ENCODE measurements at regions of chr22 and their contacts with region 1.

Region 1: GRCh38 chr22:43187171-43188099 is 501 bp upstream of the TTLL12 start:
- DNase-seq: peak; percentile 98
- H3K4me3 Mint-ChIP-seq: peak overlapping the region; percentile 87
- H3K27ac Mint-ChIP-seq: peak overlapping the region; percentile 95
- H3K4me1 Mint-ChIP-seq: peaks cover 23% of the 10 kb centered on the region
- H3K27me3 Mint-ChIP-seq: no peaks in the 10 kb centered on the region

Region 2: GRCh38 chr22:42856865-42857704 is 330.4 kb before region 1 on chr22 and contains the start of gene ARFGAP3:
- CTCF ChIA-PET with region 1: no interaction called
- intact Hi-C with region 1: loop called (anchors 2 kb)
- DNase-seq: peak; percentile 94
- H3K4me3 Mint-ChIP-seq: peak within 1 kb of the TSS; percentile 81
- H3K27ac Mint-ChIP-seq: peak within 1 kb of the TSS; percentile 66
- H3K4me1 Mint-ChIP-seq: peaks cover 6% of the 10 kb centered on the region
- H3K27me3 Mint-ChIP-seq: no peaks in the 10 kb centered on the region
- total RNA-seq, gene ARFGAP3: 25.6 to 28.6 TPM

Region 3: GRCh38 chr22:43110444-43110926 is 77.0 kb before region 1 on chr22 and contains the start of gene BIK:
- CTCF ChIA-PET with region 1: no interaction called
- intact Hi-C with region 1: loop called (anchors 2 kb)
- DNase-seq: peak; percentile 49
- H3K4me3 Mint-ChIP-seq: peak within 1 kb of the TSS; percentile 69
- H3K27ac Mint-ChIP-seq: no peak within 1 kb of the TSS
- H3K4me1 Mint-ChIP-seq: peaks cover 5% of the 10 kb centered on the region
- H3K27me3 Mint-ChIP-seq: peaks cover 3% of the 10 kb centered on the region
- total RNA-seq, gene BIK: 2.0 to 2.5 TPM

Region 4: GRCh38 chr22:43151251-43152002 is 36.0 kb before region 1 on chr22 and contains the start of gene TSPO:
- CTCF ChIA-PET with region 1: interaction called, 5 read pairs
- intact Hi-C with region 1: loop called (anchors 2 kb)
- DNase-seq: peak; percentile 57
- H3K4me3 Mint-ChIP-seq: peak within 1 kb of the TSS; percentile 86
- H3K27ac Mint-ChIP-seq: peak within 1 kb of the TSS; percentile 80
- H3K4me1 Mint-ChIP-seq: peaks cover 33% of the 10 kb centered on the region
- H3K27me3 Mint-ChIP-seq: no peaks in the 10 kb centered on the region
- total RNA-seq, gene TSPO: 112 to 121 TPM

Region 5: DNA sequence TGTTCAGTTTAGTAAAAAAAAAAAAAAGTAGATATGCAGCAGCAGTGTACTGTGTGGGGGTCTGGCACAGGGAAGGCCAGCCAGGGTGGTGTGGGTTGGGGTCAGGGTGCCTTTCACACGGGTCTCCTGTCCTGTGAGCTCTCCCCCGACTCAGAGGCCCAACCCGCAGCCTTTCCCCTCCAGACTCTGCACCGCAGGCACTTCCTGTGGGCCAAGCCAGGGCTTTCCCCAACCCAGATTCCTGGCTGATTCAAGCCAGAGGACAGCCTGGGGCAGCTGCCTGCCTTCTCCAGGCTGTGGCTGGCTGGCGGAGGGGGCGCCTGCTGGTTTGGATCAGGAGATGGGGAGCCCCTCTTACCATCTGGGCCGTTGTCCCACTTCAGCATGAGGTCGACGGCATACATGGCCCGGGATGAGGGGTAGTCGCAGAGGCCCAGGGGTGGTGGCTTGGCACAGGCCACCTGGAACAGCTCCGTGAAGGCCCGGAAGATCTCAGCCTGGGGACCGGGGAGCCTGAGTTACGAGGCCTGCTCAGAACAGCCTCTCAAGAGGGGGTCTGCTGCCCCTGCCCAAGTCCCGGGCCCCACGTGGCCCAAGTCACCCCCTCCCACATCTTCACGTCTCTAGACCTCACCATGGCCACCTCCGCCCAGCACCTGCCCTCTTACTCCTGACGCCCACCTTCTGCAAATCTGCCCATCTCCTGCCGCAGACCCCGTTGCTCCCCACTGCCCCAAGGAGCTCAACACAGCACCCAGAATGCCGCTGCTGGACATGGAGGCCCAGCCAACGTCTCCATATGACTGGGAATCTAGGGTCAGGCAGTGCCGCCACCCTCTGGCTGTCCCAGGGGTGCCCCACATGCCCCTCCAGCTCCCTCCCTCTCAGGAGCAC is 18.8 kb before region 1 on chr22:
- CTCF ChIA-PET with region 1: no interaction called
- intact Hi-C with region 1: no loop called
- DNase-seq: no peak
- H3K4me3 Mint-ChIP-seq: no peak overlapping the region
- H3K27ac Mint-ChIP-seq: no peak overlapping the region
- H3K4me1 Mint-ChIP-seq: no peaks in the 10 kb centered on the region
- H3K27me3 Mint-ChIP-seq: no peaks in the 10 kb centered on the region

Region 6: DNA sequence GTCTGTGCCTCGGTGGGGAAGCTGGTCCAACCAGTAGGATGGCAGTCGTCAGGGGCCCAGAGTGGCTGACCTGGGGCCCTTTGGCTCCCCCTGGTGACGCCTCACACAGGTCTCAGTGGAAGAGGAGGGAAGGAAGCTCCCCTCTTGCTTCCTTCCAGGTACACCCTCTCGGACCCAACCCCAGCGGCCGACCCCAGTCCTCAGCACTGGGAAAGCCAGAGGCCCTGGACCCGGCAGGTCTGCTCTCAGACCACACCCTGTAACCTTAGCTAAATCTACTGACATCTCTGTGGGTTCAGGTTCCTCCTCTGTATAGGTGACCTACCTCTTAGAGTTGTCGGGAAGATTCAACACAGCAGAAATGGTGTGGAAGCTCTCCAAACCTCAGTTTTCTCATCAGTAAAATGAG is 159.1 kb after region 1 on chr22:
- CTCF ChIA-PET with region 1: interaction called, 5 read pairs
- intact Hi-C with region 1: loop called (anchors 2 kb)
- DNase-seq: peak; percentile 76
- H3K4me3 Mint-ChIP-seq: no peak overlapping the region
- H3K27ac Mint-ChIP-seq: no peak overlapping the region
- H3K4me1 Mint-ChIP-seq: peaks cover 14% of the 10 kb centered on the region
- H3K27me3 Mint-ChIP-seq: peaks cover 46% of the 10 kb centered on the region